ENCODE measurements at regions of chr7 and their contacts with region 1.

Region 1: DNA sequence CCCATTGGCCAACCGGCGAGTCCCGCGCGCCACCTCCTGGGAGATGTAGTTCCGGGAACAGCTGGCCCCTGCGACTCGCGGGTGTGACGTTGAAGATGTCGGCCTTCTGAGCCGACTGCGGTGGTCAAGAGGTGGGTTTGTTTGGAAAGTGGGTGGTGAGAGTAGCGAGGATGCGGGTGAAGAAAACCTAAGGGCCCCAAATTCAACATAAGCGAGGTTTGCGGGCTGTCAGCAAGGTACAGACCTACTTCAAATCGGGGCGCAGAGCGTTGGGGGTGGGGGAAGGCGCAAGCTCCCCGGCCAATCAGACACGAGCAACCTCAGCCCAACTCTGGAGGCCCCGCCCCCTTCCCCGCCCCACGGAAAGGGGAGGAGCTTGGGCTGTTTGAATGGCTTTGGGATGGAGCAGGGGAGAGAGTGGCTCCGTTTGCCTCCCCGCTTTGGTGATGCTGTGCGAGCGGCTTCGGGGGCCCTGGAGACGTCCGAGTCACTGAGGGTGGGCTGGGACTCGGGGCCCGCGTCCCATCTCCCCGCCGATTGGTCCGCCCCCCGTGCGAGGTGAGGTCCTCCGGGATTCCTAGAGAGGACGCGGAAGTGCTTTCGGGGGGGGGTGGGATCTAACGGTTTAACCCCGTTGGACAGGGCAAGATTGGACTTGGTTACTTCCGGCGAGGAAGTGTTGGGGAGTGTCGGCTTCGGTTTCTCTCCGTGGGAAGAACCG is at the start of gene ZKSCAN5:
- DNase-seq: peak; percentile 96
- H3K4me3 Mint-ChIP-seq: peak within 1 kb of the TSS; percentile 87
- H3K27ac Mint-ChIP-seq: peak within 1 kb of the TSS; percentile 83
- H3K4me1 Mint-ChIP-seq: peaks cover 17% of the 10 kb centered on the region
- H3K27me3 Mint-ChIP-seq: no peaks in the 10 kb centered on the region
- CTCF ChIP-seq: no peak
- total RNA-seq, gene ZKSCAN5: 13.6 and 16.2 TPM in 2 replicates

Region 2: DNA sequence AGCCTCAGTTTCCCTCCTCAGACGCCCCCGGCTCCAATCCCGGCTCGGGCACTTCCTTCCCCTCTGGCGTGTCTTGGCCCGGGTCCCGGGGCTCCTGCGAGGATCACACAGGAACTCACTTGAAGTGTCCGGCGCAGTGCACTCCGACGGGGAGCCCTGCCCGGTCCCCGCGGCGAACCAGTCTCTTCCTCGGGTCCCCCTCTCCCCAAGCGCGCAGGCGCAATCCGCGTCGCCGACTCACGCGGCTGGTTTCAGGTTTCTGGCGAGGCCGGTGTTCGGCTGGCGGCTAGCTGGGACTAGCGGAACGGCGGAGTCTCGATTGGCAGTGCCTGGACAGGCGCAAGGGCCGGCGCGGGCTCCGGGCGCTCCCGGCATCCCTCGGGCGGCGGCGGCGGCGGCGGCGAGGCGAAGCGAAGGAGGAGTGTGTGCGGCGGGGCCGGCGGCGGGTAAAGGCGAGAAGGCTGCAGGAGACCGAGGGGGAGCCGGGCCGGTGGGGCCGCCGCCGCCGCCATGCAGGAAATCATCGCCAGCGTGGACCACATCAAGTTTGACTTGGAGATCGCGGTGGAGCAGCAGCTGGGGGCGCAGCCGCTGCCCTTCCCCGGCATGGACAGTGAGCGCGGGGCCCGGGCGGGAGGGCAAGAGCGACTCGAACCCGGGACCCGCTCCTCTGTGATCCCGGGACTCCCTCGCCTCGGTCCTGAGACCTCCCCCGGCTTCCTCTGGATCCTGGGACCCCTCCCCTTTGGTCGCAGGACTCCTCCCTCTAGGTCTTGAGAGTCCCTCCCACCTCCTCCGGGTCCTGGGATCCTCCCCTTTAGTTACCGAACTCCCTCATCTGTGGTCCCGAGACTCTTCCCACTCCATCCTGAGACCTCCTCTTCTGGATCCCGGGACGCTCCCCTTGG is 65.9 kb before region 1 on chr7 and contains the starts of genes CPSF4 and PTCD1:
- CTCF ChIA-PET with region 1: no interaction called
- POLR2A ChIA-PET with region 1: interaction called, 13 read pairs
- intact Hi-C with region 1: no loop called
- DNase-seq: peak; percentile 96
- H3K4me3 Mint-ChIP-seq: peak within 1 kb of the TSS; percentile 94
- H3K27ac Mint-ChIP-seq: peak within 1 kb of the TSS; percentile 97
- H3K4me1 Mint-ChIP-seq: peaks cover 5% of the 10 kb centered on the region
- H3K27me3 Mint-ChIP-seq: no peaks in the 10 kb centered on the region
- CTCF ChIP-seq: no peak
- total RNA-seq, gene CPSF4: 49.5 and 62.6 TPM in 2 replicates
- total RNA-seq, gene PTCD1: 4.9 and 8.6 TPM in 2 replicates

Region 3: DNA sequence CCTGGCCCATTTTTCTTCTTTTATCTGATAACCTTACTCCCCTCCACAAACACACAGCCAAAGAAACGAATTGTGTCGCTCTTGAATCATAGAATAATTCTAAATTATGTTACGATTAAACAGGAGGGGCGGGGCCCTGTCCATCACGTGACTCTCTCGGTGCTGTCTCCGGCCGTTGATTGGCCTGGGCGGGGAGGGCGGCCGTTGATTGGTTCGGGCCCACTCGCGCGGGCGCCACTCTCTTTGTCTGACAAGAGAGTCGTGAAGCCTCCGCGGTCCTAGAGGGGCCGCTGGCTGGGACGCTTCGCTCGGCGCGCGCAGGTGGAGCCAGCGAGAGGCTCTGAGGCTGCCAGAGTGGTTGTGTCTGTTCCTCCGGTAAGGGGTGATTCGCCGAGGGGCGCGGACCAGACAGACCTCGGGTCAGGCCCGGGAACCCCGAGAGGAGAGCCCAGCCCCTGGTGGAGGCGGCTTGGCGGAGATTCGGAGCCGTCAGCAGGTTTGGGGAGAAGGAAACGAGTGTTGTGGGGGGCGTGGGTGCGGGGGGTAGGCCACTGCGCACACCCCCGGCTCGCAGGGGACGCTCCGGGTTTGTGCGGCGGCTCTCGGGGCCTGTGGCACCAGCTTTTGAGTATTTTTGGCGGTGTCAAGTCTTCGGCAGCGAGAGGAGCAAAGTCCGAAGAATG is 32.1 kb before region 1 on chr7 and contains the start of gene ZNF789:
- CTCF ChIA-PET with region 1: no interaction called
- POLR2A ChIA-PET with region 1: interaction called, 22 read pairs
- intact Hi-C with region 1: no loop called
- DNase-seq: peak; percentile 96
- H3K4me3 Mint-ChIP-seq: peak within 1 kb of the TSS; percentile 91
- H3K27ac Mint-ChIP-seq: peak within 1 kb of the TSS; percentile 92
- H3K4me1 Mint-ChIP-seq: no peaks in the 10 kb centered on the region
- H3K27me3 Mint-ChIP-seq: no peaks in the 10 kb centered on the region
- CTCF ChIP-seq: no peak
- total RNA-seq, gene ZNF789: 15.0 and 19.9 TPM in 2 replicates

Region 4: GRCh38 chr7:99551767-99552463 is 47.2 kb after region 1 on chr7 and contains the start of gene FAM200A:
- CTCF ChIA-PET with region 1: no interaction called
- POLR2A ChIA-PET with region 1: interaction called, 51 read pairs
- intact Hi-C with region 1: no loop called
- DNase-seq: peak; percentile 84
- H3K4me3 Mint-ChIP-seq: peak within 1 kb of the TSS; percentile 69
- H3K27ac Mint-ChIP-seq: peak within 1 kb of the TSS; percentile 90
- H3K4me1 Mint-ChIP-seq: peaks cover 6% of the 10 kb centered on the region
- H3K27me3 Mint-ChIP-seq: no peaks in the 10 kb centered on the region
- CTCF ChIP-seq: no peak
- total RNA-seq, gene FAM200A: 6.1 and 7.4 TPM in 2 replicates

Region 5: GRCh38 chr7:99616359-99617191 is 111.8 kb after region 1 on chr7 and contains the start of gene ZSCAN25:
- CTCF ChIA-PET with region 1: no interaction called
- POLR2A ChIA-PET with region 1: interaction called, 23 read pairs
- intact Hi-C with region 1: loop called (anchors 2 kb)
- DNase-seq: peak; percentile 91
- H3K4me3 Mint-ChIP-seq: peak within 1 kb of the TSS; percentile 90
- H3K27ac Mint-ChIP-seq: peak within 1 kb of the TSS; percentile 93
- H3K4me1 Mint-ChIP-seq: peaks cover 24% of the 10 kb centered on the region
- H3K27me3 Mint-ChIP-seq: no peaks in the 10 kb centered on the region
- CTCF ChIP-seq: no peak
- total RNA-seq, gene ZSCAN25: 17.6 and 20.9 TPM in 2 replicates